ENCODE measurements at regions of chr6 and their contacts with region 1.

Region 1: GRCh38 chr6:25490018-25490801 is 161.8 kb upstream of the SCGN start:
- DNase-seq: peak; percentile 37 to 74
- ATAC-seq: peak; percentile 83 to 90 (median 86)
- H3K4me3 ChIP-seq: no peak overlapping the region
- H3K27ac ChIP-seq: peak overlapping the region in 1 of 10 donors; percentile 25
- H3K4me1 ChIP-seq: peaks cover 0 to 26% (median 20%) of the 10 kb centered on the region in 9 donors
- H3K27me3 ChIP-seq: no peaks in the 10 kb centered on the region
- CTCF ChIP-seq: peak; percentile 48 to 87 (median 80)

Region 2: DNA sequence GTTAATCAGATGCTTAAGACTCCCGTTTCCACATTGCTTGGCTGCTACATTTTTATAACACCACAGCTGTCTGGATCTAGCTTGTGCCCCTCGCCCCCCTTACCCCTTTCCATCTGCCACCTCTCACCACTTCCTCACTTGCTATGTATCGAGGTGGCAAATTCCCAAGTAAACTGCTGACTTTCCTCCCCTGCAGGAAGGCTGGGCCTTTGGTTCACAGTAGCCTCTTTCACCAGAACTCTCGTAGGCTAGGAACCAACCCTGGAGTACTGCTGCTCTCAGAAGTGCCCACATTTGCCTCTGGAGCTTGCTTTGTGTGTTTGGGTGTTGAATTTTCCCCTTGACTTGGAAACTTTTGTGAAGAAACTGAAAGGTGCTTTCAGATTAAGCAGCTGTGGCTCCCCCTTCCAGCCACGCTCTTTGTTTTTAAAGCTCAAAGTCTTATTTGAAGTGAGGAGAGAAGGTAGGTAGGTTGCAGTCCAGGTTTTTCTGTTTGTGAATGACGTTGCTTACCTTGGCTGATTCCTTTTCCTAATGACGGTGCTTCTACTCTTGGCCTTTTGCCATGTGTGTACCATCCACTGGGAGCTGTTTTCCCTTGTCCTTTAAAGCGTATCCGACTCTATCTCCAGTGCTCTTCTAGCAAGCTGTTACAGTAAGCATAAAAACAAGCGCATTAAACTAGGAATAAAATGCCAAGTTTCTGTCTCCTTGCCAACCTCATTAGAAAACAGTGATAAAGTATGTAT is 120.6 kb before region 1 on chr6:
- intact Hi-C with region 1: loop called in 1 of 10 experiments (anchors 10 kb)
- DNase-seq: peak in 1 of 2 donors; percentile 37
- ATAC-seq: peak; percentile 26 to 81 (median 75)
- H3K4me3 ChIP-seq: peak overlapping the region in 1 of 10 donors; percentile 10
- H3K27ac ChIP-seq: peak overlapping the region in 6 of 10 donors; percentile 23 to 70 (median 32)
- H3K4me1 ChIP-seq: peaks cover 4 to 45% (median 20%) of the 10 kb centered on the region in 9 donors
- H3K27me3 ChIP-seq: no peaks in the 10 kb centered on the region
- CTCF ChIP-seq: no peak

Measured in heart right ventricle (tissue), 16 donors.